CD4-positive, alpha-beta T cell (primary cell): ENCODE measurements at regions of chr19 and their contacts with region 1.

Region 1: DNA sequence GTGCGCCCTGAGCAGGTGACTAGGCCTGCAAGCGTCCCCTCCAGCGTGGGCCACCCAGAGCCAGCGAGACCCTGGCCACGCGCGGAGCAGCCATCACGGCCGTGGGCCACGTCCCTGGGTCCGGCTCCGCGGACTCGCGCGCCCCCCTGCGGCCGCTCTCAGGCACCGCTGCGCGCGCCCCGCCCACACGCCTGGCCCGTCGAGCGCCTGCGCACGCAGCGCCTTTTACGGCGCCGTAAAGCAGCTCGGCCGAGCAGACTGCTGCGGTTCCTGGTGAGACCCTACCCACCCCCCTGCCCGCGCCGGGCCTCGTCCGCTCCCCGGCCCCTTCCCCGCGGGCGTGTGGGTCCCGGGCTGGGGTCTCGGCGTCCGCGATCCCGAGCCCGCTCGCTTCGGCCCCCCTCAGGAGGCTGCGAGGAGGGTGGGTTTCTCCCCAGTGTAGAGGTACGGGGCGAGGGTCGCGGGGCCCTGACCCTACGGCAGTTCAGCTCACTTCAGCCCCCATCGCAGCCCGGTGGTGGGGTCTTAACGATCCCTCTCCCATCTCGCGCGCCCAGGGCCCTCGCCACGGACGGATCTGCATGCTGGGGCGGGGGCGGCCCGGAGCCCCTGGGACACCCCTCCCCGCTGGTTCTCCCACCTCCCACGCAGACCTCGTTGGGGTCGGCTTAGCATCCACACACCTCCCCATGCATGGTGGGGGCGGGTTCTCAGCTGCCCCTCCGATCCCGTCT is at the start of gene TRAPPC5:
- DNase-seq: peak; percentile 76 to 95 (median 84)
- ATAC-seq: peak; percentile 40
- H3K4me3 ChIP-seq: peak within 1 kb of the TSS; percentile 100
- H3K4me3 Mint-ChIP-seq: peak within 1 kb of the TSS; percentile 97
- H3K27ac ChIP-seq: peak within 1 kb of the TSS; percentile 72 to 83
- H3K27ac Mint-ChIP-seq: peak within 1 kb of the TSS; percentile 90
- H3K4me1 ChIP-seq: peaks cover 58% of the 10 kb centered on the region
- H3K4me1 Mint-ChIP-seq: peaks cover 44% of the 10 kb centered on the region
- H3K27me3 ChIP-seq: peaks cover 9 to 12% of the 10 kb centered on the region in 2 experiments
- H3K27me3 Mint-ChIP-seq: peaks cover 29% of the 10 kb centered on the region
- CTCF ChIP-seq: peak; percentile 93
- total RNA-seq, gene TRAPPC5: 41.3 to 43.4 TPM

Region 2: GRCh38 chr19:7104747-7105447 is 575.9 kb before region 1 on chr19:
- CTCF ChIA-PET with region 1: no interaction called
- POLR2A ChIA-PET with region 1: no interaction called
- intact Hi-C with region 1: loop called in 1 of 2 experiments (anchors 5 kb)
- DNase-seq: peak in 1 of 14 experiments; percentile 10
- ATAC-seq: no peak
- H3K4me3 ChIP-seq: no peak overlapping the region
- H3K4me3 Mint-ChIP-seq: no peak overlapping the region
- H3K27ac ChIP-seq: no peak overlapping the region
- H3K27ac Mint-ChIP-seq: no peak overlapping the region
- H3K4me1 ChIP-seq: peaks cover 10% of the 10 kb centered on the region
- H3K4me1 Mint-ChIP-seq: peaks cover 22% of the 10 kb centered on the region
- H3K27me3 ChIP-seq: no peaks in the 10 kb centered on the region
- H3K27me3 Mint-ChIP-seq: no peaks in the 10 kb centered on the region
- CTCF ChIP-seq: no peak

Region 3: GRCh38 chr19:7562646-7563393 is 118.0 kb before region 1 on chr19:
- CTCF ChIA-PET with region 1: interaction called, 39 read pairs
- POLR2A ChIA-PET with region 1: interaction called, 11 read pairs
- intact Hi-C with region 1: loop called (anchors 1 kb)
- DNase-seq: peak in 2 of 14 experiments; percentile 31 to 35
- ATAC-seq: no peak
- H3K4me3 ChIP-seq: no peak overlapping the region
- H3K4me3 Mint-ChIP-seq: no peak overlapping the region
- H3K27ac ChIP-seq: no peak overlapping the region
- H3K27ac Mint-ChIP-seq: no peak overlapping the region
- H3K4me1 ChIP-seq: no peaks in the 10 kb centered on the region
- H3K4me1 Mint-ChIP-seq: no peaks in the 10 kb centered on the region
- H3K27me3 ChIP-seq: no peaks in the 10 kb centered on the region
- H3K27me3 Mint-ChIP-seq: no peaks in the 10 kb centered on the region
- CTCF ChIP-seq: no peak

Region 4: GRCh38 chr19:7595466-7596133 is 85.2 kb before region 1 on chr19 and contains the start of gene CAMSAP3:
- CTCF ChIA-PET with region 1: no interaction called
- POLR2A ChIA-PET with region 1: no interaction called
- intact Hi-C with region 1: no loop called
- DNase-seq: peak in 10 of 14 experiments; percentile 16 to 66 (median 29)
- ATAC-seq: peak; percentile 76
- H3K4me3 ChIP-seq: peak within 1 kb of the TSS; percentile 26
- H3K4me3 Mint-ChIP-seq: peak within 1 kb of the TSS; percentile 80
- H3K27ac ChIP-seq: no peak within 1 kb of the TSS
- H3K27ac Mint-ChIP-seq: no peak within 1 kb of the TSS
- H3K4me1 ChIP-seq: peaks cover 11% of the 10 kb centered on the region
- H3K4me1 Mint-ChIP-seq: peaks cover 5% of the 10 kb centered on the region
- H3K27me3 ChIP-seq: peaks cover 31 to 37% of the 10 kb centered on the region in 2 experiments
- H3K27me3 Mint-ChIP-seq: peaks cover 54% of the 10 kb centered on the region
- CTCF ChIP-seq: no peak
- total RNA-seq, gene CAMSAP3: 0.16 to 0.25 TPM

Region 5: DNA sequence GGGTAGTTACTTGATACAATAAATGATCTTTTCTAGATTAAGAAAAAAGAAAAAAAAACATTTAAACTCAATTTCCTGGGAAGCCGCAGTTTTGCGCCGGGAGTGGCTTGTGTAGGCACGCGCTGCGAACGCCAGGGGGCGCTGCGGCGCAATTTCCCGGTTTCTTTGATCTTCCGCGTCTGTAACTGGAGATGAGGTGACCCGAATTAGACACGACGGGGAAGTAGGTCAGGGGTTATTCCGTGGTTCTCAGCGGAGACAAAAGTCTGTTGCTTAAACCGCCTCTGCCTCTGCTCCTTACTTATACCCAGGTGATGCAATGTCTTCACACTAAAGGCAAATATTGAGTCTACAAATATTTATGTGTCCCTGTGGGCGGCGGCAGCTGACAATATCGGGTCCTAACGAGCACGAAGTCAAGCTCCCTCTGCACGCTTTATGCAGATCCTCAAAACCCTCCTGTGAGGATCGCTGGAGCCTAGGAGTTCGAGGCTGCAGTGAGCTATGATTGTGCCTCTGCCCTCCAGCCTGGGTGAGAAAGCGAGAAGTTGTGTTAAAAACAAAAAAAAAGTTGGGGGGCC is 28.6 kb before region 1 on chr19:
- CTCF ChIA-PET with region 1: interaction called, 17 read pairs
- POLR2A ChIA-PET with region 1: interaction called, 6 read pairs
- intact Hi-C with region 1: loop called (anchors 1 to 2 kb)
- DNase-seq: peak; percentile 81 to 94 (median 86)
- ATAC-seq: peak; percentile 99
- H3K4me3 ChIP-seq: peak overlapping the region; percentile 31
- H3K4me3 Mint-ChIP-seq: peak overlapping the region; percentile 77
- H3K27ac ChIP-seq: peak overlapping the region in 1 of 2 donors; percentile 49
- H3K27ac Mint-ChIP-seq: peak overlapping the region; percentile 87
- H3K4me1 ChIP-seq: peaks cover 16% of the 10 kb centered on the region
- H3K4me1 Mint-ChIP-seq: peaks cover 12% of the 10 kb centered on the region
- H3K27me3 ChIP-seq: no peaks in the 10 kb centered on the region
- H3K27me3 Mint-ChIP-seq: no peaks in the 10 kb centered on the region
- CTCF ChIP-seq: peak; percentile 99

Region 6: DNA sequence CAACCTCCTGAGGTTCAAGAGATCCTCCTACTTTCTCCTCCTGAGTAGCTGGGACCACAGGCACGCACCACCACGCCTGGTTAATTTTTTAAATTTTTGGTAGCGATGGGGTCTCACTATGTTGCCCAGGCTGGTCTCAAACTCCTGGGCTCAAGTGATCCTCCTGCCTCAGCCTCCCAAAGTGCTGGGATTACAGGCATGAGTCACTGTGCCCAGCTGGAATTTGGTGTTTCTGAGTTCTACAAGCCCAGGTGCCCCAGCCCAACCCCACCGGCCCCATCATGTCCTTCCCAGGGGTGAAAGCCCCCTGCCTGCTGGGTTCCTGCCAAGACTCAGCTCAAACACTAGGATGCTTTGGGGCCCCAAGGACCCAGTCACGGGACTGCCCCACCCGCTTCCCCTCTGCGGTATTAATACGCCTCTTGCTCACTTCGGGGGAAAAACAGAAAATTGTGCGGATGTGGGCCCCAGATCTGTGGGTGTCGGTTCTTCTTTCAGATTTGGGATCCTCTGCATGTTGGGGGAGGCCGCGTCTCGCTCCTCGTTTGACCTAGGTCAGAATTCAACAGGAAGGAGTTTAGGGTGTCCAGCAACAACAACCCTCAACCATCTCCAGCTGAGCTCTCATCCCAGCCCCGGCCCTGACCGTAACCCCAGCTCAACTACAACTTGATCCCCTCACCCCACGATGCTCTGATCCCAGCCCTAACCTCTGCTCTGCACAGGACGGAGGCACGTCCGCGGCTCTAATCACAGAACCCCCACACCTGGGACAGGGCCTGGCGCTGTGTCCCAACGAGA is 24.8 kb after region 1 on chr19:
- CTCF ChIA-PET with region 1: interaction called, 7 read pairs
- POLR2A ChIA-PET with region 1: interaction called, 29 read pairs
- intact Hi-C with region 1: no loop called
- DNase-seq: peak; percentile 56 to 92 (median 72)
- ATAC-seq: peak; percentile 95
- H3K4me3 ChIP-seq: peak overlapping the region; percentile 28
- H3K4me3 Mint-ChIP-seq: peak overlapping the region; percentile 78
- H3K27ac ChIP-seq: peak overlapping the region; percentile 80 to 83
- H3K27ac Mint-ChIP-seq: peak overlapping the region; percentile 97
- H3K4me1 ChIP-seq: peaks cover 57% of the 10 kb centered on the region
- H3K4me1 Mint-ChIP-seq: peaks cover 45% of the 10 kb centered on the region
- H3K27me3 ChIP-seq: no peaks in the 10 kb centered on the region
- H3K27me3 Mint-ChIP-seq: no peaks in the 10 kb centered on the region
- CTCF ChIP-seq: no peak

Region 7: GRCh38 chr19:7759156-7759555 is 78.4 kb after region 1 on chr19:
- CTCF ChIA-PET with region 1: no interaction called
- POLR2A ChIA-PET with region 1: no interaction called
- intact Hi-C with region 1: no loop called
- DNase-seq: no peak
- ATAC-seq: no peak
- H3K4me3 ChIP-seq: no peak overlapping the region
- H3K4me3 Mint-ChIP-seq: no peak overlapping the region
- H3K27ac ChIP-seq: no peak overlapping the region
- H3K27ac Mint-ChIP-seq: no peak overlapping the region
- H3K4me1 ChIP-seq: no peaks in the 10 kb centered on the region
- H3K4me1 Mint-ChIP-seq: peaks cover 7% of the 10 kb centered on the region
- H3K27me3 ChIP-seq: peaks cover 0 to 4% of the 10 kb centered on the region in 2 experiments
- H3K27me3 Mint-ChIP-seq: peaks cover 9% of the 10 kb centered on the region
- CTCF ChIP-seq: no peak